CD8-positive, alpha-beta memory T cell (primary cell): ENCODE measurements at regions of chr9 and their contacts with region 1.

Region 1: DNA sequence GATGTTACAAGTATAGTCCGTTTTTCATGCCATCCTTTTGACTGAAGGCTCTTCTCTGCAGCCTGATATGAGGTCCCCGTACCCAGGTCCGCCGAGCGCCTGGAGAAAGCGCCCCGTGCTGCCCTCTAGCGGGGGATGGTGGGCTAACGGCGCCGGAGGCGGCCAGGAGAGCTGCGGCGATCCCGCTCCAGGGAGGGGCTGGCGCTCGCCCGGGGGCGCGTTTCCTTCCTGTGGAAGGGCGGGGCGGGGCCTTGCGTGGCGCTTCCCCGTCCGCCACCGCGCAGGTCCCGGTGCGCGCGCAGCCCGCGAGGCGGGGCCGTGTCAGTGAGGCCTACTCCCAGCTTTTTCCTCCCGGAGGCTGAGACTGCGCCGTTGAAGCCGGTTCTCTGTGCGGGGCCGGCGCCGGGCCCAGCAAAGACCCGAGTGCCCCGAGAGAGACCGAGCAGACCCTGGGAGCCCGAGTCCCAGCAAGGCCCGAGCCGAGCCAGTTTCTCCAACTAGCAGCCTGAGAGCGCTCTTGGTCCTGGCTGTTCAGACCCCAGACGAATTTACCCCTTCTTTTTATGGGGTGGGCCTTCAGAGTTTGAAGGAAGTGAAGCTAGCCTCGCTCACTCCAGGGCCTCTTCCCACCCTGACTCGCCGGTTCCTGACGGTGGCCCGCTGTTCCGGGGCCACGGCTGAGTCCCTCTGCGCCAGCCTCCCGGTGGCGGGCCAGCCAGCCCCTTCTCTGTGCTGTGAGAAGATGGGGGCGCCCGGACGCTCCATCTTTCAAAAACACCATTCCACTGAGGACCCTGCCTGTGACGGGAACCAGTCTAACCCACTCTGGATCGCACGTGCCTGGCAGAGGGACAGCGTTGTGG is 9.7 kb upstream of the PHF2 start:
- DNase-seq: peak; percentile 98 to 99 (median 99)
- H3K4me3 ChIP-seq: peak overlapping the region; percentile 68
- H3K4me3 Mint-ChIP-seq: peak overlapping the region; percentile 80 to 93 (median 83)
- H3K27ac ChIP-seq: peak overlapping the region; percentile 83
- H3K27ac Mint-ChIP-seq: peak overlapping the region; percentile 86 to 99 (median 94)
- H3K4me1 ChIP-seq: peaks cover 15% of the 10 kb centered on the region
- H3K4me1 Mint-ChIP-seq: peaks cover 16 to 24% (median 21%) of the 10 kb centered on the region in 3 donors
- H3K27me3 ChIP-seq: no peaks in the 10 kb centered on the region
- H3K27me3 Mint-ChIP-seq: peaks cover 0 to 3% of the 10 kb centered on the region in 2 donors

Region 2: GRCh38 chr9:93453047-93453914 is 113.4 kb before region 1 on chr9 and contains the start of gene FAM120AOS:
- CTCF ChIA-PET with region 1: interaction called, 16 read pairs
- POLR2A ChIA-PET with region 1: interaction called, 7 read pairs
- DNase-seq: peak; percentile 79 to 88 (median 84)
- H3K4me3 ChIP-seq: peak within 1 kb of the TSS; percentile 74
- H3K4me3 Mint-ChIP-seq: peak within 1 kb of the TSS; percentile 86 to 97 (median 89)
- H3K27ac ChIP-seq: peak within 1 kb of the TSS; percentile 80
- H3K27ac Mint-ChIP-seq: peak within 1 kb of the TSS; percentile 80 to 99 (median 95)
- H3K4me1 ChIP-seq: peaks cover 50% of the 10 kb centered on the region
- H3K4me1 Mint-ChIP-seq: peaks cover 55 to 70% (median 62%) of the 10 kb centered on the region in 3 donors
- H3K27me3 ChIP-seq: no peaks in the 10 kb centered on the region
- H3K27me3 Mint-ChIP-seq: no peaks in the 10 kb centered on the region
- total RNA-seq, gene FAM120AOS: 41.0 to 42.7 TPM

Region 3: DNA sequence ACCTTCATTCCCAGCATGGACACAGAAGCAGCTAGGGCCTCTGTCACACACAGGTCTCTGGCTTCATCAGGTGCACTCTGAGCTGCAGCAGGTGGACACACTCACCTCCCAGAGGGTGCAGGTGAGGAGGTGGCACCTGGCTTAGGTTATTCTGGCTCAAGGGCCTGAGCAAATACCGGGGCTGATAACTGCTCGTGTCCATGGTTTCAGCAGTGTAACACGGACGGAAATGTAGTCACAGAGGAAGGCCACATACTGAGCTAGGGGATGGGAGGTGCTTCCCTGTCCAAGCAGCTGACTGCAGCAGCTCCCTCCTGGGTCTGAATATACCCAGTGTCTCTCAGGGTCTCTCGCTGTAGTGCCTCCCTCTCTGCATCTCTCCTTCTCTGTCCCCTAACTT is 15.5 kb after region 1 on chr9:
- CTCF ChIA-PET with region 1: interaction called, 13 read pairs
- POLR2A ChIA-PET with region 1: interaction called, 9 read pairs
- DNase-seq: no peak
- H3K4me3 ChIP-seq: no peak overlapping the region
- H3K4me3 Mint-ChIP-seq: peak overlapping the region in 1 of 7 donors; percentile 58
- H3K27ac ChIP-seq: no peak overlapping the region
- H3K27ac Mint-ChIP-seq: peak overlapping the region in 3 of 8 donors; percentile 6 to 31 (median 8)
- H3K4me1 ChIP-seq: peaks cover 11% of the 10 kb centered on the region
- H3K4me1 Mint-ChIP-seq: peaks cover 59 to 85% (median 82%) of the 10 kb centered on the region in 3 donors
- H3K27me3 ChIP-seq: no peaks in the 10 kb centered on the region
- H3K27me3 Mint-ChIP-seq: no peaks in the 10 kb centered on the region